Activated T-helper 1 cell treated with anti-CD3 and anti-CD28 coated beads, Interleukin-12 subunit alpha, Interleukin-12 subunit beta, Interleukin-2, Interleukin-4 antibody, amounts not matched to agents 30 ng/mL and 10 ng/mL and 1 ng/mL, durations not matched to agents 14 hours and 24 hours and 36 hours (primary cell): ENCODE measurements at regions of chr6 and their contacts with region 1.

Region 1: DNA sequence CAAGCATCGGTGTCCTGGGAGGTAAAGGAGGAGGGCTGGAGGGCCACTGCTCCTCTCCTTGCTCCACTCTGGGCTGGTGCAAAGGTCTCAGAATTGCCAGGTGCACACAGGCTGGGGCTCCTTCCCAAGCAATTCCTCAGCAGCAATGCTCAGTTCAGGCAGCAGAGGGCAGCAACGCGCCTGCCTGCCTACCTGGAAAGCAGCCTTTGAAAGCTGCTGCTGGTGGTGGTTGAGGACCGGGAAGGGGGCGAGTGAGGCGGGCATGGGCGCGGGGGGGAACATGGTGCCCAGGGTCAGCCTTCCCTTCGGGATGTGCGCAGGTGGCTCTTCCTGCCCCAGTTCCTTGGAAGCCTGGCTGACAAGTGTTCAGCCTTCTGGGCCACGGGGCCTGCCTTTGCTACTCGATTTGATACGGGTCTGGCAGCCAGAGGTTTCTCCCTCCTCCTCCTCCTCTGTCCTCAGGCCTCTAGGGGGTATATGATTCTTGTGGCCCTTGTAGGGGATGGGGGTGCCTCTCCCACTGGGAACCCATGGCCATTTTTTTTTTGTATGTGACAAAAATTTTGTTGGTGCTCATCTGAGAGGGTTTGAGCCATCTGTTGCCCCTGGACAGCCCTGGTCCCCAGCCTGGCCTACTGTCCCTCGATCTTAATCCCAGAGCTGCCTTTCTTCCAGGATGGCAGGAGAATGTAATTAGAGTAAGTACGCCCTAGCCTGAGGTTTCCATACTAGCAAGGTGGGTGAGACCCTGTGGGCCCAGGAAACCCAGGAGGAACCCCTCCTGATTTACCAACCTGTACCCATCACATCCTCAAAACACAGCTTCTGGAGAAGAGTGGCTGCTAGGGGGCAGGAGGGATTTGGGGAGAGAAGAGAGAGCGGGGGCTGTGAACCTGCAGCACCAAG is 20.1 kb downstream of the MRPS18A start:
- DNase-seq: peak; percentile 66
- H3K4me3 Mint-ChIP-seq: peak overlapping the region; percentile 51
- H3K27ac Mint-ChIP-seq: peak overlapping the region; percentile 65
- H3K4me1 Mint-ChIP-seq: peaks cover 49% of the 10 kb centered on the region
- H3K27me3 Mint-ChIP-seq: no peaks in the 10 kb centered on the region

Region 2: GRCh38 chr6:43635387-43636307 is 31.9 kb before region 1 on chr6 and contains the start of gene MAD2L1BP:
- intact Hi-C with region 1: loop called (anchors 2 kb)
- DNase-seq: peak; percentile 88
- H3K4me3 Mint-ChIP-seq: peak within 1 kb of the TSS; percentile 94
- H3K27ac Mint-ChIP-seq: peak within 1 kb of the TSS; percentile 90
- H3K4me1 Mint-ChIP-seq: peaks cover 52% of the 10 kb centered on the region
- H3K27me3 Mint-ChIP-seq: no peaks in the 10 kb centered on the region
- total RNA-seq, gene MAD2L1BP: 34.8 and 39.0 TPM in 2 replicates

Region 3: DNA sequence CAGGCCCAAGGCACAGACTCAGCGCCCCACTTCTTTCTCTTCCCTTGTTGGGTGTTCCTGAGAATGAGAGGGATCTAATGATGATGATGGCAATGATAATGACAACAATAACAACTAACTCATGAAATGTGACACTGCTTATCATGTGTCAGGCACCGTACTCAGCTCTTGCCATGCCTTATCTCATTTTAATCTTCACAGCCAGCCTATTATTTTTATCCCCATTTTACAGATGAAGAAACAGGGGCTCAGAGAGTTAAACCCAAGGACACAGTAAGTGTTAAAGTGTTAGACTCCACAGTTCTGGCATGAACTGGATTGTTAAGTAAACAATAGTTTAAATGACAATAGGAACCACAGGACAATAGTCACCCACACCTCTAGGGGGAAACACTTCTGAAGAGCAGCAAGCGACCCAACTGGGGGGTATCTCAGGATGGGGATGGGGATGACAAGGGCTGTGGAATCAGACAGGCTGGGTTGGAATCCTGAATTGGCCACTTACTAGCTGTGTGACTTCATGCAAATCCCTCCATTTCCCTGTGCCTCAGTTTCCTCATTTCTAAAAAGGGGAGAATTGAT is 10.2 kb before region 1 on chr6:
- intact Hi-C with region 1: no loop called
- DNase-seq: no peak
- H3K4me3 Mint-ChIP-seq: no peak overlapping the region
- H3K27ac Mint-ChIP-seq: no peak overlapping the region
- H3K4me1 Mint-ChIP-seq: peaks cover 6% of the 10 kb centered on the region
- H3K27me3 Mint-ChIP-seq: peaks cover 8% of the 10 kb centered on the region

Region 4: GRCh38 chr6:43687437-43688347 is 20.2 kb after region 1 on chr6 and contains the start of gene MRPS18A:
- intact Hi-C with region 1: loop called (anchors 1 kb)
- DNase-seq: peak; percentile 81
- H3K4me3 Mint-ChIP-seq: peak within 1 kb of the TSS; percentile 92
- H3K27ac Mint-ChIP-seq: peak within 1 kb of the TSS; percentile 85
- H3K4me1 Mint-ChIP-seq: peaks cover 46% of the 10 kb centered on the region
- H3K27me3 Mint-ChIP-seq: no peaks in the 10 kb centered on the region
- total RNA-seq, gene MRPS18A: 55.0 and 55.9 TPM in 2 replicates

Region 5: DNA sequence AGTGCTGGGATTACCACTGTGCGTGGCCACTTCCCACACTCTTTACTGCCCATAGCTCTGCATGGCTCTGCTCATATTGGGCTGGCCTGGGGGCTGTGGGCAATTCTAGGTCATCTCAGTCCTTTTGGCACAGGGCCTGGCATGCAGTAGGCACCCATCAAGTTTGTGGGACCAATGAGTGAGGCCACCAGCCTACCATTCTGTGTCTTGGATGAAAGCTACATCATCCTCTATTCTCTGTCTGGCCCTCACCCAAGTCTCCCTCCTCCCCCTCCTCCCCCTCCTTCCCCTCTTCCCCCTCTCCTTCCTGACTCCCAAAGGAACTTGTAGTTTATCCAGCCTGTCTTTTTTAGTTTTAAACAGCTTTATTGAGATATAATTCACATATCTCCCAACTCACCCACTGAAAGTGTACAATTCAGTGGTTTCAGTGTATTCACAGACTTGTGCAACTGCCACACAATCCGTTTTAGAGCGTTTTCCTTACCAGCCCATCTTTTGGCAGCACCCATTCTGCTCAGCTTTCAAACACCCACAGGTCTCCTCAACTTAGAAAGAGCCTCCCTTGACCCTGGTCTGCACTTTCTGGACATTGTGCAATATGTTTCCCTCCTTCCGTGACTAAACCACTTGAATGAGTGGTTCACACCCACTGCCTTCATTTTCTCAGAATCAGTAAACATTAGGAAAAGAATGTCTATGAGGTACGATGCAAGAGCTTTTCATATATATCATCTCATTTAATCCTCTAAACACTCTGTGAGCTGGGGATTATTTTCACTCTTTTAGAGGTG is 41.6 kb after region 1 on chr6:
- intact Hi-C with region 1: loop called (anchors 1 kb)
- DNase-seq: no peak
- H3K4me3 Mint-ChIP-seq: no peak overlapping the region
- H3K27ac Mint-ChIP-seq: peak overlapping the region; percentile 50
- H3K4me1 Mint-ChIP-seq: peaks cover 30% of the 10 kb centered on the region
- H3K27me3 Mint-ChIP-seq: peaks cover 16% of the 10 kb centered on the region

Region 6: GRCh38 chr6:43723737-43724295 is 56.3 kb after region 1 on chr6:
- intact Hi-C with region 1: loop called (anchors 1 kb)
- DNase-seq: peak; percentile 50
- H3K4me3 Mint-ChIP-seq: no peak overlapping the region
- H3K27ac Mint-ChIP-seq: no peak overlapping the region
- H3K4me1 Mint-ChIP-seq: peaks cover 32% of the 10 kb centered on the region
- H3K27me3 Mint-ChIP-seq: peaks cover 6% of the 10 kb centered on the region

Region 7: GRCh38 chr6:43774776-43775534 is 107.5 kb after region 1 on chr6:
- intact Hi-C with region 1: loop called (anchors 1 kb)
- DNase-seq: peak; percentile 57
- H3K4me3 Mint-ChIP-seq: peak overlapping the region; percentile 56
- H3K27ac Mint-ChIP-seq: peak overlapping the region; percentile 27
- H3K4me1 Mint-ChIP-seq: peaks cover 39% of the 10 kb centered on the region
- H3K27me3 Mint-ChIP-seq: peaks cover 2% of the 10 kb centered on the region

Region 8: DNA sequence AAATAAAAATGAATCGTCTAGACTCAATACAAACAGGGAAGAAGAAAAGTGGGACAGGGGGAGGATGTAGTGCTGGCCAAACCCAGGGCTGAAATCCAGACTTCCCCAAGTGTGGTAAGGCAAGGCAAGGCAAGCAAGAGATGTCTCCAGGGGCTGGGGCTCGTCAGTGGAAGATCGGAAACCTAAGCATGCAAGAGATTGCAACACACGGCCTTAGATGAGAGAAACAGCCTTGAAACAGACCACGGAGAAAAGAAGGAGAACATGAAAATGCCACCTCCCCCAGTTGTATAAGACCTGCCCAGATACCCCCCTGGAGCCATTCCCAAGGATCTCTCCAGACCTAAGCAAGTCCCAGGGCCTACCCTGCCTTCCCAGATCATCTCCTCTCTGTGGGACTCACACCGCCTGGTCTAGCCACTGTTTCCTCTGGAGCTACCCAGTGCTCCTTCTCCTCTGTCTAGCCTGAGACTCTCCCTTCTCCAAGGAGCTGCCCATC is 122.6 kb after region 1 on chr6:
- intact Hi-C with region 1: no loop called
- DNase-seq: no peak
- H3K4me3 Mint-ChIP-seq: no peak overlapping the region
- H3K27ac Mint-ChIP-seq: no peak overlapping the region
- H3K4me1 Mint-ChIP-seq: no peaks in the 10 kb centered on the region
- H3K27me3 Mint-ChIP-seq: no peaks in the 10 kb centered on the region

Region 9: DNA sequence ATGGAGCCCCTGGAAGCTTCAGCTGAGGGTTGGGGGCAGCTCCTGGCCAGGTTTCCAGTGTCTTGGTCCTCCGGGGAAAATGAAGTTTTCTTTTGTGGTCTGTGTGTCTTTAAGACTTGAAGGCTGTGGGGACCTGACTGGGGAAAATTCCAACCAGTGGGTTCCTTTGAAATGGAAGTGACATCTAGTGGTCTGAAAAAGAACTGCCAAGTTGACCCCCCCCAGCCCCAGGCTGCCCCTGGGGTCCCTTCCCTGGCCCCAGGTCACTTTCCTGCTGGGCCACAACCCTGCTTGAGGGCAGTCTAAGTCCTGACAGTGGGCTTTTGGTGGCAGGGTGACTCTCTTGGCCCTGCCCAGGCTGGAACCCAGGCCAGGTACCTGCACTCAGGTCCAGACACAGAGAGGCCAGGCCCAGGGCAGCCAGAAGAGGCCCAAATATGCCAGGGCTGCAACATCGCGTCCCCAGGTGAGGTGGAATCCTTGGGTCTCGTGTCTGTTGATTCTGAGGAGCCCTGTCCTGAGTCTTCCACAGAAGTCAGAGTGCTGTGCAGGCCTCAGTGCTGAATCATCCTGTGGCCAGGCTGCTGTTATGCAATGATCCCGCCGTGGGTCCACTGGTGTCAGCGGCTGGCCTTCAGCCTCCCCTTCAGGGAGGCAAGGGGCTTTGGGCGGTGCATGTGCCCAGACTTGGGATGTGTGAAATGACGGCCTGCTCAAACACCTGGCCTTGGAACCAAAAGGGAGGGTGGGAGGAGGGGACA is 171.0 kb after region 1 on chr6:
- intact Hi-C with region 1: loop called (anchors 5 kb)
- DNase-seq: no peak
- H3K4me3 Mint-ChIP-seq: no peak overlapping the region
- H3K27ac Mint-ChIP-seq: no peak overlapping the region
- H3K4me1 Mint-ChIP-seq: no peaks in the 10 kb centered on the region
- H3K27me3 Mint-ChIP-seq: peaks cover 3% of the 10 kb centered on the region